Upper lobe of right lung (tissue), 1 donor: ENCODE measurements at regions of chr17 and their contacts with region 1.

Region 1: DNA sequence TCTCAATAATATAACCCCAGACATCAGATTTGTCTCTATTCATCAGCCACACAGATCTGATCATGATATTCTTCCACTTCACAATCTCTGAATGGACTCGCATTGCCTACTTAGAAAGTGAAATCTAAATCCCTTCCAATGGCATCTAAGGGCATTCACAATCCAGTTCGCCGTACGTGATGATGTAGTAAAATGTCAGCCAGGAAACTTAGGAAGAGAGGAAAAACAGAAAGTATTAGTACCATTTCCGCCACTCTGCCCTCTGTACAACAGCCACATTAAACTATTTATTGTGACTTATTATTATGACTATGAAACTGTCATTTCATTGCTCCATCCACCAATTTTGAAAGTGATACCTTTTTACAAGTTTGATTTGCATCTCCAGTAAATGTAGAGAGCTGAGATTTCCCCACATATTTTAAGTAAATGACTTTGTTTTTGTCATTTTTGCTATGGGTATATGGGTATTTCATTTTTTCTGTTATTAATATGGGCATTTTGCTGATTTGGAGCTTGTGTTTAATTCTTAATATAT is 69.4 kb upstream of the SMIM36 start:
- DNase-seq: no peak
- ATAC-seq: no peak
- H3K4me3 ChIP-seq: no peak overlapping the region
- H3K27ac ChIP-seq: no peak overlapping the region
- H3K4me1 ChIP-seq: peaks cover 24% of the 10 kb centered on the region
- H3K27me3 ChIP-seq: no peaks in the 10 kb centered on the region
- CTCF ChIP-seq: no peak

Region 2: GRCh38 chr17:55533608-55534007 is 47.1 kb before region 1 on chr17:
- intact Hi-C with region 1: loop called (anchors 10 kb)
- DNase-seq: no peak
- ATAC-seq: no peak
- H3K4me3 ChIP-seq: no peak overlapping the region
- H3K27ac ChIP-seq: no peak overlapping the region
- H3K4me1 ChIP-seq: no peaks in the 10 kb centered on the region
- H3K27me3 ChIP-seq: no peaks in the 10 kb centered on the region
- CTCF ChIP-seq: no peak